ENCODE measurements at regions of chr9 and their contacts with region 1.

Region 1: DNA sequence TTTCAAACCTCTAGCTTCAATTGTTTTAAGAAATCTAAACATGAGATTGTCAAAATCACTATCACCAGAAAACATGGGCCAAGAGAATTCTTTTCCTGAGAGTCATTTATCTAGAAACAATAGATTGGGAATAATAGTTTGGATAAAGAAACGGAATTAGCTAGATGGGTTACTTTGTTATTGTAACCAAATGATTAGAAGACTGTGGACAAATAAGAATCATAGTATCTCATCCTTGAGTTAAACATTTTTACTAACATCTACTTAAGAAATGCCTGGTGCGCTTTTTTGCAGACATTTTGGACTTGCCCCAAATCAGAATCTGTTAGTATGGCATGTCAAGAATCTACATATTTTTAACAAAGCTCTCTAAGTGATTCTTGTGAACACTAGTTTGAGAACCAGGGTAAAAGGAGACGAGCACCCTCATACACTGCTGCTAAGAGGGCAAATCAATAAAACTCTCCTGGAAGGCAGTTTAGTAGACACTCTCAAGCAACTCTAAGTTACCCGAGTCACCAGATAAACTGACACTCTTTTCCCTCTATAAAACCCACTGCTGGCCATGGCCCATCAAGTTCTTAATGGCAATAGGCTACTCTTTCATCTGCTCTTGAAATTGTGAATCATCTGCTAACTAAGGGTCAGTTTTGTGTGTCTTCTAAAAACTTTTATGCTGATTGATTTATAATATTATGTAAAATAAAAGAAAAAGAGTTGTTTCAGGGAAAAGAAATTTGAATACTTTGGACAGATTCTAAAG is 39.1 kb downstream of the TPD52L3 start:
- DNase-seq: no peak
- ATAC-seq: no peak

Region 2: GRCh38 chr9:6428940-6429889 is 61.9 kb after region 1 on chr9:
- intact Hi-C with region 1: loop called in 1 of 2 experiments (anchors 10 kb)
- DNase-seq: no peak
- ATAC-seq: peak in 1 of 2 donors; percentile 30

Measured in left cardiac atrium (tissue), 4 donors.